ENCODE measurements at regions of chr15 and their contacts with region 1.

Region 1: DNA sequence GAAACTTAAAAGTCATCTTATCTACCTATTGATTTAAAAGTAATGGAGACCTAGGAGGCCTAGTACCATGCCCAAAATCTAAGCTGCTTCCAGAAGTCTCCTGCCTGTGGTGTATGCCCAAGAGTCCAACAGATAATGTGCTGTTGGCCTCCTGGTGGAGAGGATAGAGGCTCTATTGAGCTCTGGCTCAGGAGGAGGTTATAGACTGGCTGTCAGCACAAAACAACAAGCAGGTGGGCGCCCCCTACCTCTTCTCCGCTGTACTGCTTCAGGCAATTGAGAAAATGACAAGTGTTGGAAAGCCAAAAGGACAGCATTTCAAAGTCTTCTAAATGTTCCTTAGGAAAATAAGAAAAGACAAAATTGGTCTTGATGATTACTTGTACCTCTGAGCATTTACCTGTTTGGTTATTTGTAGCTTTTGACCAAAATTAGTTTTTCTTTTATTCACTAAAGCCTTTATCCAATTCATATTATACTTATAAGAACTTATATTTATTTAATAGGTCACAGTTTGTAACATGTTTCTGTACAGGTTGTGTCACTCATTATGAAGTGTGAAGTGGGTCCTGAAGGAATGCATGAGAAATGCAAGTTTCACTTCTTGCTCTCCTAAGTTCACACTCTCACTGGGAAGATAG is 17.2 kb upstream of the GNB5 start:
- DNase-seq: peak; percentile 88
- ATAC-seq: peak; percentile 99
- H3K4me3 Mint-ChIP-seq: no peak overlapping the region
- H3K27ac Mint-ChIP-seq: no peak overlapping the region
- H3K4me1 Mint-ChIP-seq: no peaks in the 10 kb centered on the region
- H3K27me3 Mint-ChIP-seq: no peaks in the 10 kb centered on the region

Region 2: GRCh38 chr15:52163321-52164190 is 44.9 kb before region 1 on chr15:
- CTCF ChIA-PET with region 1: interaction called, 5 read pairs
- POLR2A ChIA-PET with region 1: no interaction called
- intact Hi-C with region 1: loop called in 1 of 2 experiments (anchors 2 kb)
- DNase-seq: peak; percentile 36
- ATAC-seq: peak; percentile 49
- H3K4me3 Mint-ChIP-seq: no peak overlapping the region
- H3K27ac Mint-ChIP-seq: no peak overlapping the region
- H3K4me1 Mint-ChIP-seq: peaks cover 22% of the 10 kb centered on the region
- H3K27me3 Mint-ChIP-seq: no peaks in the 10 kb centered on the region

Region 3: GRCh38 chr15:52193791-52194190 is 14.6 kb before region 1 on chr15:
- CTCF ChIA-PET with region 1: interaction called, 17 read pairs
- POLR2A ChIA-PET with region 1: no interaction called
- intact Hi-C with region 1: no loop called
- DNase-seq: no peak
- ATAC-seq: no peak
- H3K4me3 Mint-ChIP-seq: no peak overlapping the region
- H3K27ac Mint-ChIP-seq: no peak overlapping the region
- H3K4me1 Mint-ChIP-seq: no peaks in the 10 kb centered on the region
- H3K27me3 Mint-ChIP-seq: no peaks in the 10 kb centered on the region

Measured in activated CD4-positive, alpha-beta T cell treated with anti-CD3 and anti-CD28 coated beads for 36 hours (primary cell).